Right ventricle myocardium inferior (tissue), 1 donor: ENCODE measurements at regions of chr12 and their contacts with region 1.

Region 1: GRCh38 chr12:17763366-17763765 is 326.6 kb downstream of the RERGL start:
- DNase-seq: no peak
- ATAC-seq: no peak

Region 2: GRCh38 chr12:17841496-17841895 is 78.1 kb after region 1 on chr12:
- intact Hi-C with region 1: loop called (anchors 5 kb)
- DNase-seq: no peak
- ATAC-seq: no peak